Esophagus squamous epithelium (tissue), 5 donors: ENCODE measurements at regions of chr19 and their contacts with region 1.

Region 1: DNA sequence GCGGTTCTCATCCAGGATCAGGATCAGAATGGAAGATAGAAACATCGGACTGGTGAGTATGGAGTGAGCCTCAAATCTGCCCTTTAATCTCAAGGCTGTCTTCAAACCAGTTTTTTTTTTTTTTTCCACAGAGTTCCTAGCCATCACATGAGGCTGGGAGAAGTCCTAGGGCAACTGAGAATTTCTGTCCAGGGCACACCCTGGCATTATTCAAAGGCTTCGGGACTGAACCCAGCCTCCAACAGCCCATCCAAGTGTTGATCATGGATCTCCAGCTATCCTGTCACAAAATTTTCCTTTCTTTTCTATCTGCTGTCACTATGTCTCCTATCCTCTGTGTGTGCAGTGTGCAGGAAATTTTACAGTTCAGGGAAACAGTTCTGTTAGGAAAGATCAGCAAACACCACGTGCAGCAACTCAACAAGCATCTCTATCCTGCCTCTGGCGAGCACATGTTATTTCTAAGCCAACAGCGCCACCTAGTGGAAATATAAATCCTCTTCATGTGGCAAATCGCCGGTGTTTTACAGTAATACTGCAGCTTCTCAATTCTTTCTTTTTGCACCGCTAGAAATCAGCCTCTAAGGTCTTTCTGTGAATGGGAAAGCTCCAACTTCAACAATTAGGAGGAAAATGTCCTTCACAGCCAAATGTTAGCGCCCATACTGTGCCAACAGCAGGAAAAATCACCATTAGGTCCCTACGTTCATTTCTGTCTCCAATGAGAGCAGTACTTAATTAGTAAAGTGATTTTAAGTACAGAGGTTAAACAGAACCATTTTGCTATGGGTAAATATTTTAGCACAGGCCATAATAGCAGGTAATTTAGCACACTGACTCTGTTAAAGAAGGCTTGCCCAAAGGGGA is 21.4 kb upstream of the ZNF181 start:
- DNase-seq: no peak
- H3K4me3 ChIP-seq: no peak overlapping the region
- H3K27ac ChIP-seq: no peak overlapping the region
- H3K4me1 ChIP-seq: no peaks in the 10 kb centered on the region
- H3K27me3 ChIP-seq: peaks cover 0 to 4% (median 0%) of the 10 kb centered on the region in 4 donors
- CTCF ChIP-seq: peak; percentile 70 to 89 (median 82)
- POLR2A ChIP-seq: no peak

Region 2: GRCh38 chr19:34499981-34500495 is 212.6 kb before region 1 on chr19:
- intact Hi-C with region 1: loop called (anchors 5 kb)
- DNase-seq: no peak
- H3K4me3 ChIP-seq: no peak overlapping the region
- H3K27ac ChIP-seq: no peak overlapping the region
- H3K4me1 ChIP-seq: peaks cover 0 to 18% (median 6%) of the 10 kb centered on the region in 3 donors
- H3K27me3 ChIP-seq: peaks cover 0 to 6% (median 0%) of the 10 kb centered on the region in 4 donors
- CTCF ChIP-seq: no peak
- POLR2A ChIP-seq: no peak

Region 3: DNA sequence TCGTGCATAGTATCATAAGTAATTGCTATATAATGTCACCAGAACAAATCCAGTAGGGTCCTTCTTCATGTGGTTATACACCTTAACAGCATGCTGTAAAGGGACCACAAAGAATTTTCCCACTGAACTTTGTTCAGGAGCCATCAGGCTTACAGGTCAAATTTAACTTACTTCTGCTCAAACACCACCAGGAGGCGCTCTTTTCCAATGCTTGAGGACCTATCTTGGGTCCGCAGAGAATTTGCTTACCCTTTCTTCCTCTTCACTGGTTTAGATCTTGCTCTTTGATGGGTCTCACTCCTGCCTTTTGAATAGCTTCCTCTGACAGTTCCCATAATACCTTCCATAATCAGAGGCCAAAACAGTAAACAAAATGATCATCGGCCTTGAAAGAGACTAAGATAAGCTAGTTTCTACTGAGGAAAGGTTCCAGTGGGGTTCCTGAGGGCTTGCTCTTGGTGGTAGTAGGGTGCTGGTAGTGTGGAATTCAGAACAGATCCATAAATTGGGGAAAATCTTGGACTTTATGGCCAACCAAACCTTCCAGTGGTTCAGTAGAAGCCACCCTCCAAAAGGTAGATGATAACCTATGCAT is 73.0 kb before region 1 on chr19:
- intact Hi-C with region 1: loop called (anchors 5 kb)
- DNase-seq: no peak
- H3K4me3 ChIP-seq: no peak overlapping the region
- H3K27ac ChIP-seq: no peak overlapping the region
- H3K4me1 ChIP-seq: no peaks in the 10 kb centered on the region
- H3K27me3 ChIP-seq: no peaks in the 10 kb centered on the region
- CTCF ChIP-seq: peak; percentile 58 to 75 (median 66)
- POLR2A ChIP-seq: no peak

Region 4: GRCh38 chr19:34662919-34663318 is 49.7 kb before region 1 on chr19:
- intact Hi-C with region 1: no loop called
- DNase-seq: no peak
- H3K4me3 ChIP-seq: no peak overlapping the region
- H3K27ac ChIP-seq: no peak overlapping the region
- H3K4me1 ChIP-seq: peaks cover 0 to 13% (median 0%) of the 10 kb centered on the region in 3 donors
- H3K27me3 ChIP-seq: no peaks in the 10 kb centered on the region
- CTCF ChIP-seq: peak in 3 of 6 experiments; percentile 10 to 29 (median 24)
- POLR2A ChIP-seq: no peak